Left cardiac atrium (tissue), 4 donors: ENCODE measurements at regions of chr10 and their contacts with region 1.

Region 1: GRCh38 chr10:78316451-78316931 is 282.8 kb downstream of the RPS24 start:
- DNase-seq: peak; percentile 50
- ATAC-seq: peak; percentile 71 to 79

Region 2: DNA sequence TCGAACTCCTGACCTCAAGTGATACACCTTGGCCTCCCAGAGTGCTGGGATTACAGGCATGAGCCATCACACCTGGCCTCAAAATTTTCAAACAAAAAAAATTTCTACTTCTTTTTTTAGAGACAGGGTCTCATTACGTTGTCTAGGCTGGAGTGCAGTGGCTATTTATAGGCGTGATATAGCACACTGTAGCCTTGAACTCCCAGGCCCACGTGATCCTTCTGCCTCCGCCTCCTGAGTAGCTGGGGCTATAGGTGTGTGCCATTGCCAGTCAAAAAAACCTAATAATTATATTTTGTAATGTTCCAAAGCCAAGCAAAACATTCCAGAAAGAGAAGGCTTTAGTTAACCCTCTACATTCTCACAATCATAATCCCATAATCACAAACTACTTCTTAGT is 300.9 kb before region 1 on chr10:
- intact Hi-C with region 1: no loop called
- DNase-seq: no peak
- ATAC-seq: peak in 1 of 2 donors; percentile 67

Region 3: GRCh38 chr10:78053211-78053868 is 263.2 kb before region 1 on chr10:
- intact Hi-C with region 1: loop called in 1 of 2 experiments (anchors 10 kb)
- DNase-seq: no peak
- ATAC-seq: no peak

Region 4: GRCh38 chr10:78357141-78358063 is 40.9 kb after region 1 on chr10:
- intact Hi-C with region 1: no loop called
- DNase-seq: no peak
- ATAC-seq: no peak

Region 5: DNA sequence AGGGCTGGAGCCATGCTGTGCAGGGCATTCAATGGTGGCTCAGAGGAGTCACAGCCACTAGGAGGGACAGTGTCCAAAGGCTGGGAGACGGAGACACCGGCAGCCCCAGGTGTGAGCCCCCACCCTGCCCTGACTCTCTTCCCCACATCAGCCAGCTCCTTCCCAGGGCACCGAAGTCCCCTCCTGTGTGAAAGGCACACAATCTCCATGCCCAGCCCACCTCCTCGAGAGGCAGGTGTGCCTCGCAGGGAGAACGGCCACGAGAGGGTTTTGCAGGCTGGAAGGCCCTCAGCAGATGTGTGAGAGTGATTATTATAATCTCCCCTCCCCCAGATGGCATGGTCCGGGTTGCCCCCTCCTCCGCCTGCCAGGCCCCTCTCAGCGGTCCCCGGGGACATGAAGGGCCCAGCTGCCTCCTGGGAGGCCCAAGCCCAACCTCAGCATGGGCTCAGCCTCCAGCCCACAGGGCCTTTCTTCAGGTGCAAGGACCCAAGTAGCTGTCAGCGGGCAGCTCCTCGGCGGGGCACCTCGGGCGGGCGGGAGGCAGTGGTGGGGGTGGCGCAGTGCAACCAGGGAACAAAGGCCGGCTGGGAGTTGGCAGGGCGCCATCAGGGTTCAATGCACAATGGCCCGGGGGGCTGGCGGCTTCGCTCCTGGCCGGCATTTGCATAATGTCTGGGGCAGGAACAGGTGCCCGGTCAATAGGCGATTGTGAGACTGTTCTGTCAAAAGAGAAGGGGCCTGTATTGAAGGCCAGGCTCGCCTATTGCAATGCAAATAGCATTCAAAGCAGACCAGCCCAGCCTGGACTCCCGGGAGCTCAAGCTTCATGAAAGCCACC is 596.9 kb after region 1 on chr10:
- intact Hi-C with region 1: no loop called
- DNase-seq: no peak
- ATAC-seq: no peak